Calu3 (cell line): ENCODE measurements at regions of chr9 and their contacts with region 1.

Region 1: DNA sequence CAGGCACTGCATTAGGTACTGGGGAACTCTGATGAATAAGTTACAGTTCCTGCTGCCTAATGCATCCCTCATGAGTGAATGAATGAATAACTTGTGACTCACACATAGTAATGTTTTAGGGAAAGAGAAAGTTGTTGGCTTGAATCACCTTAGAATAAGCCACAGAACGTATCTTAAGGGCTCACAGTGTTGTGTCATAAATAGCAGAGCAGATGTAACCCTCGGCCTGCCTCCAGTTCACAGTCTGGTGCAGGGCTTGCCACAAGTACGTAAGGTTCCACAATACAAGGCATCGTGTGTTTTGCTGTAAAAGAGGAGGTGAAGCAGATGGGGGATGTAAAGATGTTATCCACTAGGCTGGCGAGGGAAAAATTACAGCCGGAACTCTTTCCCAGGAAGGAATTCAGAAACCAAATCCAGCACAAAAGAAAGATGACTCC is 218.7 kb downstream of the TRPM3 start:
- DNase-seq: peak; percentile 28
- H3K4me3 Mint-ChIP-seq: peak overlapping the region; percentile 57
- H3K27ac Mint-ChIP-seq: peak overlapping the region; percentile 72
- H3K4me1 Mint-ChIP-seq: peaks cover 26% of the 10 kb centered on the region
- H3K27me3 Mint-ChIP-seq: no peaks in the 10 kb centered on the region
- CTCF ChIP-seq: no peak

Region 2: GRCh38 chr9:70761139-70761670 is 141.5 kb before region 1 on chr9:
- CTCF ChIA-PET with region 1: no interaction called
- intact Hi-C with region 1: no loop called
- DNase-seq: no peak
- H3K4me3 Mint-ChIP-seq: no peak overlapping the region
- H3K27ac Mint-ChIP-seq: no peak overlapping the region
- H3K4me1 Mint-ChIP-seq: no peaks in the 10 kb centered on the region
- H3K27me3 Mint-ChIP-seq: peaks cover 50% of the 10 kb centered on the region
- CTCF ChIP-seq: no peak

Region 3: DNA sequence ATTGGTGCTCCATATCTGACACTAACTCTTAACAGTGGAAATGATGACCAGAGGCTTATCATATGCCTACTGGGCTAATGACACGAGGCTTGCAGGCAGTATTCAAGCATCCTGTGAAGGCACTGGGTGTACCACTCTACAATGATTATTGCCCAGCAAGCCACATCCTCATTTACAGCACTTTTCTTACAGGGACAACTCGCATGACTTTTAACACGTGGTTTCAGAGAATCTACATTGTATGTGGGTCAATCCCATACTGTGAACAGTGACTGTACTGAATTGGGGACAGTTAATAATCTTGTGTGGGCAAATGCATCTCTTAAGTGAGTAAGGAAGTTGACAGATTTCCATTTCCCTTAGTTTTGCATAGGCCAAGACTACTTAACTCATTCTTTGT is 41.3 kb before region 1 on chr9:
- CTCF ChIA-PET with region 1: no interaction called
- intact Hi-C with region 1: loop called (anchors 5 kb)
- DNase-seq: no peak
- H3K4me3 Mint-ChIP-seq: no peak overlapping the region
- H3K27ac Mint-ChIP-seq: no peak overlapping the region
- H3K4me1 Mint-ChIP-seq: no peaks in the 10 kb centered on the region
- H3K27me3 Mint-ChIP-seq: peaks cover 13% of the 10 kb centered on the region
- CTCF ChIP-seq: no peak